Activated CD4-positive, alpha-beta T cell treated with anti-CD3 and anti-CD28 coated beads, Interleukin-2, amount 10 ng/mL, durations not matched to agents 24 days and 14 days (primary cell): ENCODE measurements at regions of chr4 and their contacts with region 1.

Region 1: GRCh38 chr4:56301181-56302076 is 85.9 kb downstream of the AASDH start:
- DNase-seq: peak; percentile 91
- H3K4me3 Mint-ChIP-seq: peak overlapping the region; percentile 21
- H3K27ac Mint-ChIP-seq: no peak overlapping the region
- H3K4me1 Mint-ChIP-seq: peaks cover 11% of the 10 kb centered on the region
- H3K27me3 Mint-ChIP-seq: peaks cover 3% of the 10 kb centered on the region

Region 2: GRCh38 chr4:55866973-55867574 is 434.4 kb before region 1 on chr4:
- intact Hi-C with region 1: loop called (anchors 10 kb)
- DNase-seq: peak; percentile 69
- H3K4me3 Mint-ChIP-seq: no peak overlapping the region
- H3K27ac Mint-ChIP-seq: no peak overlapping the region
- H3K4me1 Mint-ChIP-seq: peaks cover 19% of the 10 kb centered on the region
- H3K27me3 Mint-ChIP-seq: no peaks in the 10 kb centered on the region

Region 3: GRCh38 chr4:56048702-56049431 is 252.6 kb before region 1 on chr4:
- intact Hi-C with region 1: loop called (anchors 1 kb)
- DNase-seq: peak; percentile 89
- H3K4me3 Mint-ChIP-seq: peak overlapping the region; percentile 80
- H3K27ac Mint-ChIP-seq: no peak overlapping the region
- H3K4me1 Mint-ChIP-seq: peaks cover 13% of the 10 kb centered on the region
- H3K27me3 Mint-ChIP-seq: peaks cover 54% of the 10 kb centered on the region

Region 4: DNA sequence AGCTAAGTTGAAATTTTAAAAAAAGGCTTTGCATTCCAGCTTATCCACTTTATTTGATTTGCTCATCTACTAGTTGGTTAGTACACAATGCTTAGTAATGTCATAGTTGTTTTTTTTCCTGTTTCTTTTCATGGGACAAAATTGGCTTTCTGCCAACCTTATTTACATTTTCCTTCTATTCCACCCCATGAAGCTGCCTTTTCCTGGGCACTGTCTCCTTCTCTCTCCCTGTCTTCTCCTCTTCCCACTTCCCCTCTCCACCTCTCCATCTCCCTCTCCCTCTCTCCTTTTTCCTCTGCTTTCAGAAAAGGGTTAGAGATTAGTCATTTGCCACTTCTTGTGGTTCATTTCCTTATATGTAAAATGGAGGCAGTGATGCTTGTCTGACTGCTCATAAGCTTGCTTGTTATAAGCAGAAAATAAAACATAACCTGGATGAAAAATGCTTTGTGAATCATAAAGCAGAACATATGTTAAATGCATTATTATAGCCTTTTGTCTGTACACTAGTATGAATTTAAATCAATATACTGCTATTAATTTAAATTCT is 170.7 kb before region 1 on chr4:
- intact Hi-C with region 1: loop called (anchors 2 kb)
- DNase-seq: peak; percentile 40
- H3K4me3 Mint-ChIP-seq: no peak overlapping the region
- H3K27ac Mint-ChIP-seq: no peak overlapping the region
- H3K4me1 Mint-ChIP-seq: no peaks in the 10 kb centered on the region
- H3K27me3 Mint-ChIP-seq: peaks cover 11% of the 10 kb centered on the region